Esophagus squamous epithelium (tissue), 5 donors: ENCODE measurements at regions of chr14 and their contacts with region 1.

Region 1: DNA sequence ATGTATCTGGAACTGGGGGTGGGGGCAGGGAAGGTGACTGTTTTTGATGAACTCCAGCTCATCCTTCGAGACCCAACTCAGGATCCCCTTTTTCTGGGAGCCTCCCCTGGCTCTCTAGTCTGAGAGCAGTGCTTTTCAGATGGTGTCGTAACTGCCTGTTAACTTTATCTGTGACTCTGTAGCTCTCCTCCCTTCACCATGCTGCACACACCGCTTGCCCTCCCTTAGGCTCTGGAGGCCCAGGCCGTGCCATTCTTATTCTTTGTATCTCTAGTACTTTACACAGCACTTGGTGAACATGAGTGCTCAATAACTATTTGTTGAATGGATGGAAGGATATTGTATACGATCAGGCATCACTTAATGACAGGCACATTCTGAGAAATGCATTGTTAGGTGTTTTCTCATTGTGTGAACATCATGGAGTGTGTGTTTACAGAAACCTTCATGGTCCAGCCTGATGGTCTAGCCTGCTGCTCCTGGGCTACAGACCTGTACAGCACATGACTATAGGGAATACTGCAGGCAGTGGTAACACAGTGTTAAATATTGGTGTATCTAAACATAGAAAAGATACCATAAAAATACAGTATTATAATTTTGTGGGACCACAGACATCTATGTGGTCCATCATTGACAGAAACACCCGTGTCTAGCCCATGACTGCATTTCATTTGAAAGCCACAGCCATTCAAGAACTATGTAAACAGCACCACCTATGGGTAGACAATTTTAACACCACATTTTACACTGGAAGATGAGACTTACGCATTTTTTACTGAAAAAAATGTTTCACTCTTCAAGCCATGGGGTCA is 91.8 kb downstream of the EML1 start:
- DNase-seq: no peak
- H3K4me3 ChIP-seq: no peak overlapping the region
- H3K27ac ChIP-seq: no peak overlapping the region
- H3K4me1 ChIP-seq: peaks cover 0 to 10% (median 5%) of the 10 kb centered on the region in 3 donors
- H3K27me3 ChIP-seq: no peaks in the 10 kb centered on the region
- CTCF ChIP-seq: peak; percentile 40 to 80 (median 73)
- POLR2A ChIP-seq: no peak

Region 2: DNA sequence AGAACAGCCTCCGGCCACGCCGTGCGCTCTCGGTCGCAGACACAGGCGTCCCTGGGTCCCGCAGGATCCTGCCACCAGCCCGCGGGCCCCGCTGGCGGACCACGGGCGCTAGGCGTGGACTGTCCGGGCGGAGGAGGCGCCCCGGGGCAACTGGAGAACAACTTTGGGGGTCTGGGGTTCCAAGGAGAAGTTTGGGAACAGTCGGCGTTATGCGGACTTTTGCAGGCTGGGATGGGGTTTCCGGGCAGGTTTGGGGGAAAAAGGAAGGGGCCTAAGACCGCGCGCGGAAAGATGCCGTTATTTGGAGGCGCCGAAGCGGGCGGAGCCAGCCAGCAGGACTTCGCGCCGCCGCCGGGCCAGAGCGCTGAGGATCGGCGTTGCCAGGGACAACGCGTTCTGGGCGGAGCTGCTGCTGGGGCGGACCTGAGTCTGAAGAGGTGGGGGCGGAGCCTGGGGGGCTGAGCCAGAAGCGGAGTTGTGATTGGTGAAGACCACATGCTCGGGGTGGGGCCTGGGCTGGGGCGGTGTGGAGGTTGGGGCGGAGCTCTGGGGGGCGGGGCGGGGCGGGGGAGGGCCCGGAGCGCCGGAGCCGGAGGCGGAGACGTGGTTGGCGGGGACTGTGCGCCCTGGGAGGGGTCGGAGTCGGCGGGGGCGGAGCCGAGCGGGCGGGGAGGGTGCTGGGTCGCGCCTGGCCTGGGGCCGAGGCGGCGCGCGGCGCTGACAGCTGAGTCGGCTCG is 201.3 kb before region 1 on chr14 and contains the start of gene CYP46A1:
- intact Hi-C with region 1: loop called (anchors 5 kb)
- DNase-seq: peak; percentile 95
- H3K4me3 ChIP-seq: peak within 1 kb of the TSS; percentile 59 to 77 (median 68)
- H3K27ac ChIP-seq: peak within 1 kb of the TSS; percentile 77 to 92 (median 82)
- H3K4me1 ChIP-seq: peaks cover 11 to 19% (median 12%) of the 10 kb centered on the region in 3 donors
- H3K27me3 ChIP-seq: peaks cover 0 to 39% (median 0%) of the 10 kb centered on the region in 4 donors
- CTCF ChIP-seq: peak in 2 of 6 experiments; percentile 10
- POLR2A ChIP-seq: peak in 1 of 4 donors; percentile 6
- total RNA-seq, gene CYP46A1: 0.04 to 1.1 TPM in 2 of 4 donors, not detected in the others

Region 3: DNA sequence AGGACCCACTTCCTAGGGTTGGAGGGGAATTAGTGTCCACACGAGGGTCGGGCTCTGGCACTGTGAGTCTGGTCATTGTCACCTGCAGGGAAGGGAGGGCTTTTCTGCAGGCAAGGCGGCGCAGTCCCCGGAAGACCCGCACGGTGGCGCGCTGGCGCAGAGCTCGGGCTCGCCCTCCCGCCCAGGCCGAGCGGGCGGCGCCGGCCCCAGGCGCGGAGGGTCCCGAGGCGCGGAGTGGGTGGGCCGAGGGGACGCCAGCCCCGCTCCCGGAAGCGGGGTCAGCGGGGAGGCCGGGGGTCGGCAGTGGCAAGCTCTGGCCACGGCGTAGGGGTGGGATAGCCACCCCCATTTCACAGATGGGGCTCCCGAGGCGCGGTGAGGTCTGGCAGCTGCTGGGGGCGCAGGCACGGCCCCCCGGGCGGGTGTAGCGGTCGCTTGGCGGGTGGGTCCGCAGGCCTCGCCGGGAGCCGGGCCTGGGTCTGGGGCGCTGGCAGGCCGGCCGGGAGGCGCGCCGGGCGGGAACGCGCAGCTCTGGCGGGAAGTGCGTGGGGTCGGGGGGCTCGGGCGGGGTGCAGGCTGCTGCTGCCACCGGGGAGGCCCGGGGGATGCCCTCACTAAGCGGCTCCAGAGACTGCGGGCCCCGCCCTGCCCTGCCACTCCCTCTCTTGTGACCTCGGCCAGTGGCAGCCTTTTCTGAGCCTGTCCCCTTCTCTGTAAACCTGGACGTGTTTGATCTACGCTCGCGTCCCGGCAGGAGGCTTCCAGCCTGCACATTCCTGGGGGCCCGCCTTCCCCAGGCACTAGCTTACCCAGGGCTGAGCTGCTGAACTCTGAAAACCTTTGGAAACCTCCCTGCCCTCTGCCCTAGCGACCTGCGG is 154.8 kb before region 1 on chr14:
- intact Hi-C with region 1: loop called (anchors 5 kb)
- DNase-seq: no peak
- H3K4me3 ChIP-seq: peak overlapping the region; percentile 31 to 71 (median 51)
- H3K27ac ChIP-seq: peak overlapping the region in 2 of 4 donors; percentile 24 to 51
- H3K4me1 ChIP-seq: peaks cover 6 to 50% (median 13%) of the 10 kb centered on the region in 3 donors
- H3K27me3 ChIP-seq: peaks cover 0 to 89% (median 0%) of the 10 kb centered on the region in 4 donors
- CTCF ChIP-seq: peak in 5 of 6 experiments; percentile 76 to 92 (median 86)
- POLR2A ChIP-seq: no peak